ENCODE measurements at regions of chr10 and their contacts with region 1.

Region 1: DNA sequence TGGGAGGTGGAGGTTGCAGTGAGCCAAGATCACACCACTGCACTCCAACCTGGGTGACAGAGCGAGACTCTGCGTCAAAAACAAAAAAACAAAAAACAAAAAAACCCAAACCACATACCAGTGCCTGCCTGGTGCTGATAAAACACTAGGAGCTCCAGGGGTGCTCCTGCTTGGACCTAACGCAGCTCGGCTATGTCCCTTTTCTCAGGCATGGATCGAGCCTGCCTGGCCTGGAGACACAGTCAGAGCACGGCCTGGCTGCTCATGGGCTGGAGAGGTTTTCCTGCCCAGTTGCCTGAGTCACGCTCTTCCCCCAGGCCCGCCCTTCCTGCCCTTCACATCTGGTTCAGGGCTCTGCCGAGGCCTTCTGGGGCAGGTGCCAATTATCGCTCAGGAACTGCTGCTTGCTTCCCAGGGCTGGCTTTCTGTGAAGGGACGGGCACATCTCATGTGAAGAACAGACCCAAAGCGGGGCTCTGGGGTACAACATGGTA is 12.6 kb upstream of the NPFFR1 start:
- DNase-seq: peak; percentile 79
- H3K4me3 ChIP-seq: no peak overlapping the region
- H3K27ac ChIP-seq: no peak overlapping the region
- H3K4me1 ChIP-seq: peaks cover 9% of the 10 kb centered on the region
- H3K27me3 ChIP-seq: peaks cover 2 to 3% of the 10 kb centered on the region in 2 experiments
- CTCF ChIP-seq: no peak
- POLR2A ChIP-seq: no peak

Region 2: GRCh38 chr10:70233109-70233938 is 63.1 kb before region 1 on chr10 and contains the start of gene PPA1:
- CTCF ChIA-PET with region 1: interaction called, 3 read pairs
- POLR2A ChIA-PET with region 1: no interaction called
- dilution Hi-C with region 1: no loop called
- intact Hi-C with region 1: loop called (anchors 2 kb)
- DNase-seq: peak; percentile 96
- H3K4me3 ChIP-seq: peak within 1 kb of the TSS; percentile 72 to 91 (median 80)
- H3K27ac ChIP-seq: peak within 1 kb of the TSS; percentile 58
- H3K4me1 ChIP-seq: peaks cover 11% of the 10 kb centered on the region
- H3K27me3 ChIP-seq: no peaks in the 10 kb centered on the region
- CTCF ChIP-seq: peak in 1 of 2 donors; percentile 9
- POLR2A ChIP-seq: peak; percentile 95
- total RNA-seq, gene PPA1: 115 and 140 TPM in 2 replicates

Region 3: DNA sequence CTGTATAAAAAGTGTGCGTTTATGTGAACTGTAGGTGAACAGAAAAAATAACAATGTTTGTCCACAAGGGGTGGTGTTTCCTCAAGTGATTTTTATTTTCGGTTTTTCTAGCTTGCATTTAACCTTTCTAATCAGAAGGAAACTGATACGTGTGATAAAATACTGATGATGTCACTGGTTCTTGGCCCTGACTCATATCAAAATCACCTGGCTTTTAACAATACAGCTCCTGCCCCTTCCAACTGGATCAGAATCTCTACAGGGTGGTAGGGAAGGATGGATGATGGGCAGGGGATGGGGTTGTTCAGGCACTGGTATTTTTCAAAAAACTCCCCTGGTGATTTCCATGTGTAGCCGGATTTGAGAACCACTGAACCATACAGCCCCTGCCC is 23.5 kb before region 1 on chr10:
- CTCF ChIA-PET with region 1: interaction called, 15 read pairs
- POLR2A ChIA-PET with region 1: no interaction called
- dilution Hi-C with region 1: no loop called
- intact Hi-C with region 1: no loop called
- DNase-seq: peak; percentile 21
- H3K4me3 ChIP-seq: no peak overlapping the region
- H3K27ac ChIP-seq: no peak overlapping the region
- H3K4me1 ChIP-seq: no peaks in the 10 kb centered on the region
- H3K27me3 ChIP-seq: peaks cover 10 to 20% of the 10 kb centered on the region in 2 experiments
- CTCF ChIP-seq: peak; percentile 31 to 32
- POLR2A ChIP-seq: no peak

Region 4: DNA sequence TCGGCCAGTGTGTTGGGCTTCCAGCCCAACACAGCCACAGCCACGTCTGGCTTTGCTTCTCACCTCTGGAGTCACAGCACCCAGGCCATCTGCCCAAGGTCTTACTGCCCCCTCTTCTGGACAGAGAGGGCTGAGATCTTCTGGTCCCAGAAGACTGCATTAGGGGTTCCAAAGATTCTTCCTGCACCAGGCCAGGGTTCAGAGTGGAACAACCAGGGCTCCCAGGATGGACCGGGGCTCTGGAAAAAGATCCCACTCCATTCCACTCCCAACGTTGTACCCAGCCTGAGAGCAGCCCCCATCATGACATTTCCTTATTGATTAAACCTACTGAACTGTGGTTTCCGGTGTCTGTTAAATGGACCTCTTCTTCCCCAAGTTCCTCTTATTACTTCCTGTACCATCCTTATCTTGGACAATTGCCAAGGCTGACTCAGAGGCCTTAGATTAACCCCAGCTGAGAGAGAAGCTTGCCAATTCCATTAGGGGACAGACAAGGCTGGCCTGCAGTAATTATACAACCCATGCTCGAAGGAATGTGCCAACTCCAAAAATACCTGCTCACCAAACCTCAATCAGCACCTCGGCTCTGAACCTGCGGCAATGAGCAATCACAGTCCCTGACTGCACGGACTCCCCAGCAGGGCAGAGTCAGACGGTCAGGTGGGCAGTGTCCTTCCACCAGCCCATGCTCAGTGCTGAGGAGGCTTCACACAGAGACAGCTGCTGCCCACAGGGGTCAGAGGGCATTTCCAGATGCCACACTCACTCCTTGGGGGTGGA is 35.2 kb after region 1 on chr10:
- CTCF ChIA-PET with region 1: no interaction called
- POLR2A ChIA-PET with region 1: no interaction called
- dilution Hi-C with region 1: no loop called
- intact Hi-C with region 1: loop called (anchors 5 kb)
- DNase-seq: peak; percentile 71
- H3K4me3 ChIP-seq: no peak overlapping the region
- H3K27ac ChIP-seq: no peak overlapping the region
- H3K4me1 ChIP-seq: peaks cover 8% of the 10 kb centered on the region
- H3K27me3 ChIP-seq: peaks cover 22 to 26% of the 10 kb centered on the region in 2 experiments
- CTCF ChIP-seq: peak in 1 of 2 donors; percentile 11
- POLR2A ChIP-seq: no peak